Activated naive CD8-positive, alpha-beta T cell treated with anti-CD3 and anti-CD28 coated beads, Interleukin-2, amount 10 ng/mL, durations not matched to agents 7 days and 5 days (primary cell): ENCODE measurements at regions of chr19 and their contacts with region 1.

Region 1: DNA sequence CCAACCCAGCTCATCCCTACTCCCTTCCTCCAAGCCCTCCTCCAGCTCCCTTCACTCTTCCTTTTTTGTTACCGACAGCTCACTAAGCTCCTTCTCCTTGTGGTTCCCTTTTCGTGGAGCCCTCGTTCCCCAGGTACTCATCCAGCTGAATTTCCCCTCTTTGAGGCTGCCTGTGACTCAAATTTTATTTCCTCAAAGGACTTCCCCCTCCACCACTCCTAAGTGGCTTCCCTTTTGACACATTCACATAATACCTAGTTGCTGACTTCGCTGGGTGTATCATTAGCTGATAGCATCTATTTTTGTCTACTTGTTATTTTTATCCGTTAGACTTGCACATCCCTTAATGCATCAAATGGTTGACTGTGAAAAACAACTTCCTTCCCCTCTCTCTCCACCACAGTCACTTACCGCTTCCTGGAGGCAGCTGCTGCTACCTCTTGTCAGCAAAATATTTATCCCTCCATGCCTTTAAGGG is 14.5 kb downstream of the FFAR2 start:
- DNase-seq: no peak
- ATAC-seq: peak; percentile 94
- H3K4me3 Mint-ChIP-seq: peak overlapping the region; percentile 78
- H3K27ac Mint-ChIP-seq: peak overlapping the region; percentile 95
- H3K4me1 Mint-ChIP-seq: peaks cover 25% of the 10 kb centered on the region
- H3K27me3 Mint-ChIP-seq: peaks cover 11% of the 10 kb centered on the region

Region 2: DNA sequence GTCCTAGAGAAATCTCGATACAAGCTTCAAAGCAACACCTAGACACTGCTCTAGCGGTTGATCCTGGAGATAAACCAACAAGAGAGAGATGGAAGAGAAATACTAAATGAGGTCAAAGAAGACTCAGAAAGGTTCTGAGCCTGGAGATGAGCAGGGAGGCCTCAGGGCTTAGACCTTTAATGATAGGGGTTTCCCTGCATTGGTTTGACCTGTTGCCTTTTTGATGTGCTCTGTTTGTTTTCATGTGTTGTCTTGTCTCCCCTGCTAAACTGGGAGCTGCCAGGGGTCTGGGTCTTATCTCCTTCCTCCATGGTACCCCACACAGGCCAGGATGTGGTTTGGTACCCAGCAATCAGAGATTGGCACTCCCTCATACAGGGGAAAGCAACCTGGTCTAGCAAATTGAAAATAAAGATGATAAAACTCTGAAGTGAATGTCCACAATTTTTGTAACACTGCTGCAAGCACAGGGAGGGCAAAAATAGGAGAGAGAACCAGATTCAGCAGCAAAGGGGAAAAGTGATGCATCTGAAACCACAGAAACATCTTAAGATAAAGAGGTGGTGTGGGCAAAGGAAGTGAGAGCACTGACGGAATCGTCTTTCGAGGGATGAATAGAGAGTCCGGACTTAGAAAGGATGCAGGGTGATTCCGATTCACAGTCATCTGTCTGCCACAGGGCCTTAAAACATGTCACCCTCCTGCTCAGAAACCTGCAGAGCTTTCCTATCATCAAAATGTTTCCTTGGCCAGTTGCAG is 11.0 kb before region 1 on chr19:
- POLR2A ChIA-PET with region 1: interaction called, 16 read pairs
- DNase-seq: no peak
- ATAC-seq: peak; percentile 61
- H3K4me3 Mint-ChIP-seq: peak overlapping the region; percentile 20
- H3K27ac Mint-ChIP-seq: no peak overlapping the region
- H3K4me1 Mint-ChIP-seq: peaks cover 19% of the 10 kb centered on the region
- H3K27me3 Mint-ChIP-seq: peaks cover 30% of the 10 kb centered on the region